Naive thymus-derived CD4-positive, alpha-beta T cell (primary cell): ENCODE measurements at regions of chr1 and their contacts with region 1.

Region 1: GRCh38 chr1:112715264-112716053 is at the start of gene PPM1J:
- DNase-seq: peak; percentile 86 to 99 (median 91)
- ATAC-seq: peak; percentile 89
- H3K4me3 ChIP-seq: peak within 1 kb of the TSS; percentile 81
- H3K4me3 Mint-ChIP-seq: peak within 1 kb of the TSS; percentile 86 to 95 (median 92)
- H3K27ac ChIP-seq: peak within 1 kb of the TSS; percentile 34
- H3K27ac Mint-ChIP-seq: peak within 1 kb of the TSS in 8 of 9 donors; percentile 63 to 91 (median 82)
- H3K4me1 ChIP-seq: peaks cover 13% of the 10 kb centered on the region in 2 donors
- H3K4me1 Mint-ChIP-seq: peaks cover 17 to 37% (median 21%) of the 10 kb centered on the region in 7 donors
- H3K27me3 ChIP-seq: no peaks in the 10 kb centered on the region
- H3K27me3 Mint-ChIP-seq: peaks cover 0 to 45% (median 12%) of the 10 kb centered on the region in 5 donors
- total RNA-seq, gene PPM1J: 0.46 to 1.6 (median 0.50) TPM in 3 of 5 experiments, not detected in the others

Region 2: GRCh38 chr1:112619520-112620376 is 95.7 kb before region 1 on chr1 and contains the start of gene CAPZA1:
- CTCF ChIA-PET with region 1: no interaction called
- POLR2A ChIA-PET with region 1: interaction called, 10 read pairs
- intact Hi-C with region 1: loop called (anchors 1 to 2 kb)
- DNase-seq: peak; percentile 83 to 93 (median 91)
- ATAC-seq: peak; percentile 89
- H3K4me3 ChIP-seq: peak within 1 kb of the TSS; percentile 93
- H3K4me3 Mint-ChIP-seq: peak within 1 kb of the TSS; percentile 98 to 100 (median 99)
- H3K27ac ChIP-seq: peak within 1 kb of the TSS; percentile 100
- H3K27ac Mint-ChIP-seq: peak within 1 kb of the TSS; percentile 99 to 100 (median 100)
- H3K4me1 ChIP-seq: peaks cover 19 to 21% of the 10 kb centered on the region in 2 donors
- H3K4me1 Mint-ChIP-seq: peaks cover 27 to 55% (median 46%) of the 10 kb centered on the region in 7 donors
- H3K27me3 ChIP-seq: no peaks in the 10 kb centered on the region
- H3K27me3 Mint-ChIP-seq: peaks cover 0 to 1% (median 0%) of the 10 kb centered on the region in 5 donors
- total RNA-seq, gene CAPZA1: 114 to 237 (median 143) TPM

Region 3: DNA sequence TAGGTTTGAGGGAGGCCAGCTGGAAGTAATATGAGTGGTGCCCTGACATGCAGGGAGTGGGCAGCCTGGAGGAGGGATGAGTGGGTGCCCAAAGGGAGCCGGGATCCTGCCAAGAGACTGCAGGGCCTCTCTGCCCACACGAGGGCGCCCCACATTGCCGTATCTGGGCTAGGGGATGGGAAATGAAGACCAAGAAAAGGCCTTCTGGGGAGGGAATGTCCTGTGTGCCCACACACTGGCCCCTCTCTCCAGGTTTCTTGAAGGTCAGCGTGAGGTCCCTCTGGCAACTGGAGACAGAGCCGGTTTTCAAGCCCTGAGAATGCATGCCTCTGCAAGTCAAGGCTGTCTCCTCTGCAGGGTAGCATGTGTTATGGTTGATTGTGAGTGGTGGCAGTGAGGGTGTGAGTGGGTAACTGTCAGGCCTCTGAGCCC is 93.8 kb after region 1 on chr1:
- CTCF ChIA-PET with region 1: interaction called, 5 read pairs
- POLR2A ChIA-PET with region 1: no interaction called
- intact Hi-C with region 1: loop called (anchors 1 kb)
- DNase-seq: peak; percentile 19 to 71 (median 38)
- ATAC-seq: peak; percentile 87
- H3K4me3 ChIP-seq: no peak overlapping the region
- H3K4me3 Mint-ChIP-seq: no peak overlapping the region
- H3K27ac ChIP-seq: no peak overlapping the region
- H3K27ac Mint-ChIP-seq: no peak overlapping the region
- H3K4me1 ChIP-seq: no peaks in the 10 kb centered on the region
- H3K4me1 Mint-ChIP-seq: no peaks in the 10 kb centered on the region
- H3K27me3 ChIP-seq: no peaks in the 10 kb centered on the region
- H3K27me3 Mint-ChIP-seq: peaks cover 0 to 26% (median 0%) of the 10 kb centered on the region in 5 donors

Region 4: DNA sequence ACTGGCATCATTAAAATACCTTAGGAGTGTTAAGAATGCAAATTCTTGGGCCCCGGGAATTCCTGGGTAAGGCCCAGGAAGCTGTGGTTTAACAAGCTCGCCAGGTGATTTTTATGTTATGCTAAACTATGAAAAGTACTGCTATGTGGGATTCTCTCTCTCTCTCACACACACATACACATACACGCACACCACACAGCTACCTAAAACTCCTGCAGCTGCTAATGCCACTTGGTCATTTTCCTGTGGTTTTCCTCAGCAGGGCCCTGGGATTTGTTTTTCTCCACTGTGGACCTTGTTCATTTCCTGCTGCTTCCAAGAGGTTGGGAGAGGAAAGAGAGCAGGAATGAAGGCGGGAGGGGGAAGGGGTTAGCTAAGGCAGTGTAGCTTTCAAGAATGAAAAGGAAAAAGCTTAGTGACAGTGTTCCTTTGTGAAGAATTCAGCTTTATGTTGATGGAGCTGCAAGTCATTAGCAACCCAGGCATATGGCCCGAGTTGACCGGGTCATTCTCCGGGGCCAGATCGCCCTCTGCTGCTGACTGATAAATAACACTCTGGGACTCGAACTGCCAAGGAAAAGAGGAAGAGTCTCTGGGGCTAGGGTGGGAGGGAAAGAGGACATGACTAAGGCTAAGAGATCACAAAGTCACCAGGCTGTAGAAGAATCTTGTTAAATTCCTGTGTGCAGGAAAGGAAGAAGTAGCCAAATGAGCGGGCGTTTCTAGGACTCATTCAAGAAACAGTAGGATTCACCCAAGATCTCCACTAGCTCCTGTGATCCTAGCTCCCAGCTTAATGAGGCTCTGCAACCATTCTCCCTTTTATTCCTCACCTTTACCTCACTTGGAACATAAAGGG is 327.1 kb after region 1 on chr1:
- CTCF ChIA-PET with region 1: no interaction called
- POLR2A ChIA-PET with region 1: no interaction called
- intact Hi-C with region 1: loop called in 1 of 2 experiments (anchors 1 kb)
- DNase-seq: peak in 1 of 9 donors; percentile 13
- ATAC-seq: peak; percentile 83
- H3K4me3 ChIP-seq: no peak overlapping the region
- H3K4me3 Mint-ChIP-seq: no peak overlapping the region
- H3K27ac ChIP-seq: no peak overlapping the region
- H3K27ac Mint-ChIP-seq: peak overlapping the region in 2 of 9 donors; percentile 58 to 60
- H3K4me1 ChIP-seq: peaks cover 6 to 18% of the 10 kb centered on the region in 2 donors
- H3K4me1 Mint-ChIP-seq: peaks cover 16 to 37% (median 22%) of the 10 kb centered on the region in 7 donors
- H3K27me3 ChIP-seq: no peaks in the 10 kb centered on the region
- H3K27me3 Mint-ChIP-seq: peaks cover 0 to 10% (median 0%) of the 10 kb centered on the region in 5 donors

Region 5: DNA sequence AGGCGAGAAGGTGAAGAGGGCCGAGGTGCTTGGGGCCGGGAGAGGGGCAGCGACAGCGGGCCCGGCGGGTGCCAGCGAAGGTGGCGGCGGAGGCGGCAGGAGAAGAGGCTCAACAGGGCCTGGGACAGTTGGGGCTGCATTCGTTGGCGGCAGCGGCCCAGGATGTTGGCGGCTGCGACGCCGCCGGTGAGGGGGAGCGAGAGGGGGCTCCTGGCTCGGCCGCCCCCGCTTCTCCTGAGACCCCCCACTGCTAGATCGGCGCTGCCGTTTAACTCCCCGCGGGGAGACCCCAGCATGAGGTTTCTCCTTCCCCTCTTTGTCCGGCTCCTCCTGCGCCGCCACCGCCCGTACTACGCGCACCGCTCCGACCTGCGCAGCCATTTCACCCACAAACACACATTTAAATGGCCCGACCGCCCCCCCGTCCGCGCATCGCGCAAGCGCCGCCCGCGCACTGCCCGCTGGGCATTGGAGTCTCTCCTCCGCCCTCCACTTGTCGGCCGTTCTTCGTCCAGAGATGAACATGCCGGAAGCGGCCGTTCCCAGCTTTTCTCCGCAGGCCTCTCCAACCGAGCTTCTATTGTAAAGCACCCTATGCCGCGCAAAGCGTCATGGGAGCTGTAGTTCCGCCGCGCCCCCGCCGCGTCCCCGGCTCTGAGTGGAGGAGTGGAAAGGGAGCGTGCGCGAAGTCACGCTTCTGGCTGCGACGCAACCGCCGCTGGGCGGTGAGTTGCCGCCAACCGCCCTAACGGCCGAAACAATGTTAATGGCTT is 1096.6 kb after region 1 on chr1 and contains the start of gene RSBN1:
- CTCF ChIA-PET with region 1: no interaction called
- POLR2A ChIA-PET with region 1: no interaction called
- intact Hi-C with region 1: loop called in 1 of 2 experiments (anchors 1 kb)
- DNase-seq: peak; percentile 92 to 99 (median 98)
- ATAC-seq: peak; percentile 95
- H3K4me3 ChIP-seq: peak within 1 kb of the TSS; percentile 88
- H3K4me3 Mint-ChIP-seq: peak within 1 kb of the TSS; percentile 91 to 99 (median 97)
- H3K27ac ChIP-seq: peak within 1 kb of the TSS; percentile 97
- H3K27ac Mint-ChIP-seq: peak within 1 kb of the TSS; percentile 96 to 99 (median 98)
- H3K4me1 ChIP-seq: peaks cover 17 to 25% of the 10 kb centered on the region in 2 donors
- H3K4me1 Mint-ChIP-seq: peaks cover 20 to 51% (median 38%) of the 10 kb centered on the region in 7 donors
- H3K27me3 ChIP-seq: no peaks in the 10 kb centered on the region
- H3K27me3 Mint-ChIP-seq: no peaks in the 10 kb centered on the region
- total RNA-seq, gene RSBN1: 29.9 to 58.1 (median 42.0) TPM

Region 6: DNA sequence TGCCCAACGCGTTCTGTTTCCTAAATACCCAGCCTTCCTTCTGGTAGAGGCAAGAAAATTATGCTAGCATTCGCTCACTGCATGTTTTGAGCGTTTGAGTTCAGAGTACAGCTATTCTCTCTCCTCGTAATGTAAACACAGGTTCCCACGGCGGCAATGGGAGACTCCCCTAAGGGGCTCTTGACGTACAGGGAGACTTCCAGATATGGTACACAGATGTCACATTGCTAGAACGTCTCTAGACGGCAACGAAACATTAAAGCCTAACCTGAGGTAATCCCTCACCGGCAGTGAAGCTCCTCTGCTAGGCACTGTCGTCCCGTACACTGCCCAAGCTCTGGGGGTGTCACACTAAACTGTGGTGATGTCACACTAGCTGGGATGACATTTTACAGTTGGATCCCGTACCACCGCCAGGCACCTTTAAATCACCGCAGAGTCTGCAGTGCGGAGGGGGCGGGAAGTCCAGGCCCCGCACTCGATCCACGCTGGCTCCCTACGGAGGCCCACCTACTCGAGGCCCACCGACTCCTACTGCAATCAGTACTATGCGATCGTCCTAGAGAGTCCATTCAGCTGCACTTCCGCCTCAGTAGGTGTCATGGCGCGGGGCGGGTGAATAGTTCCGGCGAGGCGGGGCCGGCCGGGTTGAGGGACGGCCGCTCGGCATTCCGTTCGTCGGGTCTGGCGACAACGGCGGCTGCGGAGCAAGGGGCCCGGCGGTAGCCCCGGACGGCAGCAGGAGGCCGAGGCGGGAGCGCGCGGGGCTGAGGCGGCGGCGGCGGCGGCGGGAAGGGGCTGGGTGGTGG is 1213.7 kb after region 1 on chr1 and contains the start of gene HIPK1:
- CTCF ChIA-PET with region 1: no interaction called
- POLR2A ChIA-PET with region 1: no interaction called
- intact Hi-C with region 1: loop called in 1 of 2 experiments (anchors 5 kb)
- DNase-seq: peak; percentile 88 to 97 (median 93)
- ATAC-seq: peak; percentile 69
- H3K4me3 ChIP-seq: peak within 1 kb of the TSS; percentile 100
- H3K4me3 Mint-ChIP-seq: peak within 1 kb of the TSS; percentile 96 to 100 (median 99)
- H3K27ac ChIP-seq: peak within 1 kb of the TSS; percentile 99
- H3K27ac Mint-ChIP-seq: peak within 1 kb of the TSS; percentile 93 to 100 (median 100)
- H3K4me1 ChIP-seq: peaks cover 41 to 46% of the 10 kb centered on the region in 2 donors
- H3K4me1 Mint-ChIP-seq: peaks cover 41 to 56% (median 48%) of the 10 kb centered on the region in 7 donors
- H3K27me3 ChIP-seq: no peaks in the 10 kb centered on the region
- H3K27me3 Mint-ChIP-seq: peaks cover 0 to 12% (median 0%) of the 10 kb centered on the region in 5 donors
- total RNA-seq, gene HIPK1: 95.8 to 211 (median 124) TPM